ENCODE measurements at regions of chr1 and their contacts with region 1.

Region 1: DNA sequence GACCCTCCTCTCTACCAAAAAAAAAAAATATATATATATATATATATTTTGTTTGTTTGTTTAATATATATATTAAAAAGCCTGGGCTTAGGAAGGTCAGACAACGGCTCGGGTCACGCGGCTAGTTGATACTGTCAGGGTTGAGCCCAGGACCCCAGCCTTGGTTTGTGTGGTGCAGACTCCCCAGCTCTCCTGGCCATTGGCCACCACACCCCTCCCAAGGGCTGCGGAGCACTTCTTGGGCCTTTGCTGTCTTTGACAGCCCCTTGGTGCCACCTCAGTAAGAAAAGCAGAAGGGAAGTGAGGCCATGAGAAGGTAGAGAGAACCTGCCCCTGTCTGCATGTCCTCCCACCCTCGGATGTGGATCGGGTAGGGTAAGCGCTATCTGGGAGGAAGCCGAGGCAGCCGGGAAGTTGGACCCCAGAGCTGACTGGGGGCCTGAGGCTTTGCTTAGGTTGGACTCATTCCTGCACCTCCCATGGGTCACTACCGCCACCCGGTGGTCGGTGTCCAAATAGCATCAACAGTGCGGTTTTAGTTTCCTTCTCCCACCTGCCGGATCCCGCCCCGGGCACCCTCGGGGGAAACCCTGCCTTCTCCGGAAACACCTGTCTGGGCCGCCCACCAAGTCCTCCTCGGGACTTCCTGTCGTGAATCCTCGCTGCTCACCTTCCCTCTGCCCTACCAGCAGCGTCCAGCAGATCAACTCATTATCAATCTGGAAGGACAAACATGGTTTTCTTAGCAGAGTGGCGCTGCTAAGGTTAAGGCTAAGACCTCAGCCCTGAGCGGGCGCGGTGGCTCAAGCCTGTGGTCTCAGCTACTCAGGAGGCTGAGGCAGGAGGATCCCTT is 29.8 kb upstream of the GNPAT start:
- DNase-seq: peak; percentile 79 to 93
- H3K4me3 ChIP-seq: peak overlapping the region; percentile 19
- H3K4me1 ChIP-seq: peaks cover 7% of the 10 kb centered on the region
- H3K27me3 ChIP-seq: 0 out of 2 replicates have a peak, but pooled peaks cover 2% of the 10 kb centered on the region

Region 2: GRCh38 chr1:230642263-230642959 is 568.8 kb before region 1 on chr1 and contains the start of gene COG2:
- in situ Hi-C with region 1: loop called (anchors 25 kb)
- DNase-seq: peak; percentile 89 to 97
- H3K4me3 ChIP-seq: peak within 1 kb of the TSS; percentile 97
- H3K4me1 ChIP-seq: peaks cover 12% of the 10 kb centered on the region
- H3K27me3 ChIP-seq: peaks cover 11% of the 10 kb centered on the region

Region 3: DNA sequence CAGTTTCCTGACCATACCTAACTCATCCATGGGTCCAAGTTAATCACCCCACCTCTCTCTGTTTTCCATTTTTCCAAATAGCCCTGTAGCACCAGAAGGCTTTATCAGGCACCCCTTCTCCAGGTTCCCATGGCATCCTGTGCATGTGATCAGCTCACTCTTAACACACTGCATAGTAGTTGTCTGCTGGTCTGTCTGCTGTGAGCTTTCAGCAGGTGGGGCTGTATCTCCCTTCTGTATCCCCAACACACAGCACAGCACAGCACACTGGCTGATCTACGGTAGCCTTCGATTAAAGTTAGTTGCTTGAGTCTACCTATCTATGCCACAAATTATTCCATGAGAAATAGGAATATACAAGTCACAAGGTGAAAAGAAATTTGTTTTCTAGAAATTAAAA is 288.6 kb before region 1 on chr1:
- in situ Hi-C with region 1: loop called (anchors 10 kb)
- DNase-seq: no peak
- H3K4me3 ChIP-seq: no peak overlapping the region
- H3K4me1 ChIP-seq: no peaks in the 10 kb centered on the region
- H3K27me3 ChIP-seq: no peaks in the 10 kb centered on the region

Region 4: GRCh38 chr1:230986976-230987375 is 224.3 kb before region 1 on chr1:
- in situ Hi-C with region 1: no loop called
- DNase-seq: no peak
- H3K4me3 ChIP-seq: no peak overlapping the region
- H3K4me1 ChIP-seq: peaks cover 16% of the 10 kb centered on the region
- H3K27me3 ChIP-seq: no peaks in the 10 kb centered on the region

Region 5: DNA sequence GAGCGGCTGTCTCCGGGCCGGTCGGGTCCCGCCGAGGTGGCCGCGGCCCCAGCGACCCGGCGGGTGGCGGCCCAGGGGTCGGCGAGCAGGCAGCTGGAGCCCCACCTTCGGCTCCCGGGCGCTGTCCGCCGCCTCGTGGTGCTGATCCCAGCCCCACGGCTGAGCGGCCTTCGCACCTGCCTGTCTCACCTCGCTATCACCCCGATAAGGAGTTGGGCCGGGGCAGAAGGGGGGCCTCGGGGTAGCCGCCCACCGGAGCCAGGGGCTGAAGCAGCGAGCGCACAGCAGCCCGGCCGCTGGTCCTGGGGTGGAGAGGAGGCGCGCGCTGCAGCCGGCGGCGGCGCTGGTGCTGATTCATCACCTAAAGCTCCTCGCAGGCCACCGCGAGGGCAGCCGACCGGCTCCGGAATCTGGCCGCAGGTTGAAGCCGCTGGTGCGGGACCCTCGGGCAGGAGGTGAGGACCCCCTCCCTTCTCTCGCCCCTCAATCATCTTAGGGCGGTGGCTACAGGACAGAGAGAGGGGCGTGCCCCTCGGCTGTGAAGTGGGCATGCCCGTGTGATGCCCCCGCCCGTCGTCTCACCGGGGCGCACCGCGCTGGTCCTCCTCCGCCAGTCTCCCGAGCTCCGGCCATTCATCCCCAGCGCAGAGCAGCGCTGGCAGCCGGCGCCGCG is 48.8 kb before region 1 on chr1:
- in situ Hi-C with region 1: no loop called
- DNase-seq: peak; percentile 18 to 64
- H3K4me3 ChIP-seq: no peak overlapping the region
- H3K4me1 ChIP-seq: no peaks in the 10 kb centered on the region
- H3K27me3 ChIP-seq: peaks cover 35% of the 10 kb centered on the region

Measured in HAP-1 (cell line).